ENCODE measurements at regions of chr6 and their contacts with region 1.

Region 1: DNA sequence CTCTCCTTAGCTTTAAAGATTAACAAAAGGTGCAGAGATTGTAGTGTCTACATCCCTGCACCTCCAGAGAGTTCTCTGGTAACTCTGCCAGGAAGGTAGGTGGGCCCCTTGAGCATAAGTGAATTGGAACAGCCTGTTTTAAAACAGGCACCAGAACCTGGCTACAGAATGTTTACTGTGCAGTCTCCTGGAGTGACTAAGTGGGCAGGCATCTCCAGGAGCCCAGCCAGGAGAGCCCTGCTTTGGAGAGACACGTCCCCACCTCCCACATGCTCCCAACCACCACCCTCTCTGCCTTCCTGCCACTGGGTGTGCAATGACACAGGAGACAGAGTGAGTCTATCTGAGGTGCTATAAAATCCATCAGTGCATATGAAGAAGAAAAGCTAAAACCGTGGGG is 110.3 kb upstream of the EYA4 start:
- DNase-seq: peak; percentile 63 to 89
- ATAC-seq: peak; percentile 92 to 96 (median 96)
- H3K4me3 ChIP-seq: no peak overlapping the region
- H3K27ac ChIP-seq: peak overlapping the region; percentile 91
- H3K4me1 ChIP-seq: peaks cover 52% of the 10 kb centered on the region
- H3K27me3 ChIP-seq: no peaks in the 10 kb centered on the region
- CTCF ChIP-seq: peak; percentile 23

Region 2: GRCh38 chr6:133062077-133062476 is 68.8 kb before region 1 on chr6:
- intact Hi-C with region 1: loop called in 1 of 2 experiments (anchors 1 kb)
- DNase-seq: no peak
- ATAC-seq: peak; percentile 93 to 98 (median 97)
- H3K4me3 ChIP-seq: peak overlapping the region; percentile 24
- H3K27ac ChIP-seq: peak overlapping the region; percentile 84
- H3K4me1 ChIP-seq: peaks cover 14% of the 10 kb centered on the region
- H3K27me3 ChIP-seq: no peaks in the 10 kb centered on the region
- CTCF ChIP-seq: no peak

Region 3: DNA sequence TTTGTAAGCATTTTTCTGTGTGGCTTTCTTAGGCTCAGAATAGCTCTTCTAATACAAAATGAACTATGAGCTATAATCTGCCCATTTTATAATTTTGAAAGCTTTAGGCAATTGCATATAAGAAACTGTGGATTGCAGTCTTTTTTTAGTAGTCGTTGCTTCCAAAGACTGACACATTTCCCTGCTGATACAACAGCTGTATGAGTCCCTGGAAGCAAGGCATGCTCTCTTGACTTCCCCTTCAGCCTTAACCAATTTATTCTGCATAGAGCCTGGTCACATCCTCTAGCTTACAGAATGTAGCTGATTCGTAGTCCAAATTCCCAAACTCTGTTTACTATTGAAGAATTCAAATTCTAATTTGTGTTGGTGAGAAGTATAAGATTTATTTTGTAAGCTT is 45.0 kb before region 1 on chr6:
- intact Hi-C with region 1: loop called in 1 of 2 experiments (anchors 5 kb)
- DNase-seq: no peak
- ATAC-seq: no peak
- H3K4me3 ChIP-seq: no peak overlapping the region
- H3K27ac ChIP-seq: no peak overlapping the region
- H3K4me1 ChIP-seq: peaks cover 20% of the 10 kb centered on the region
- H3K27me3 ChIP-seq: no peaks in the 10 kb centered on the region
- CTCF ChIP-seq: no peak

Region 4: DNA sequence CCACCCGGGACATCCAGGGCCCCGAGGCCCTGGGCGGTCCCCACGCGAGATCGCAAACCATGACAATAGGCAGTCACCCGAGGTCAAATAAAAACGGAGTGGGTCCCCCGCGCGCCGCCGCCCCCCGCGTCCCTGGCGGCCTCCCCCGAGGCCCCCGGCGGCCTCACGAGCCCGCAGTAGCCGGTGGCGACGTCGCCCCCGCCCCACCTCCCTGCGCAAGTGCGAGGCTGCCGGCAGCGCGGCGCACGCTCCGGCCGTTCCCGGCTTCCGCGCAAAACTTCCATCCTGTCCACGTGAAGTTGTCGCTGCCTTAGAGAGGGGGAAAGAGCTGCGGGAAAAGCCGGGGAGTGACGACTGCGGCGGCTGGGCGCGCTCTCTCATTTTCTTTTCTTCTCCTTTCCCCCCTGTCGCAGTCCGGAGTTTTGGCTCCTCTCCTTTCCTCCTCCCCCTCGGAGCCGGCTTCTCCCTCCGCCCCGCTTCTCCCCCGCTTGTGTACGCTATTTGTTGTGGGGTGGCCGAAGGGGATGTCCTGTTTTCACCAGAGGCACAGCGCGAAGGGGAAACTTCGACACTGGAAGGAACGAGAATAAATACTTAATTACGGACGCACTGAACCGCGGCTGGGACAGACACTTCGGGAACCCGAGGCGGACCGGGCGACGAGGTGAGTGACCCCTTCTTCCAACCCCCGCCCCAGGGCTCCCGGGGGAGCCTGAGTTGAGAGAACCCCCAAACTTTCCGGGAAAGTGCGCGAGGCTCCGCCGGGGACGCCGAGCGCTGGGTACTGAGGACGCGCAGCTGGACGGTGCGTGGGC is 110.4 kb after region 1 on chr6 and contains the start of gene EYA4:
- intact Hi-C with region 1: loop called in 1 of 2 experiments (anchors 2 kb)
- DNase-seq: peak; percentile 60 to 85
- ATAC-seq: peak; percentile 65 to 80 (median 70)
- H3K4me3 ChIP-seq: peak within 1 kb of the TSS; percentile 93
- H3K27ac ChIP-seq: peak within 1 kb of the TSS; percentile 99
- H3K4me1 ChIP-seq: peaks cover 24% of the 10 kb centered on the region
- H3K27me3 ChIP-seq: no peaks in the 10 kb centered on the region
- CTCF ChIP-seq: no peak
- total RNA-seq, gene EYA4: 32.8 to 48.3 (median 37.4) TPM

Measured in psoas muscle (tissue), 8 donors.